Sigmoid colon (tissue), 7 donors: ENCODE measurements at regions of chr21 and their contacts with region 1.

Region 1: DNA sequence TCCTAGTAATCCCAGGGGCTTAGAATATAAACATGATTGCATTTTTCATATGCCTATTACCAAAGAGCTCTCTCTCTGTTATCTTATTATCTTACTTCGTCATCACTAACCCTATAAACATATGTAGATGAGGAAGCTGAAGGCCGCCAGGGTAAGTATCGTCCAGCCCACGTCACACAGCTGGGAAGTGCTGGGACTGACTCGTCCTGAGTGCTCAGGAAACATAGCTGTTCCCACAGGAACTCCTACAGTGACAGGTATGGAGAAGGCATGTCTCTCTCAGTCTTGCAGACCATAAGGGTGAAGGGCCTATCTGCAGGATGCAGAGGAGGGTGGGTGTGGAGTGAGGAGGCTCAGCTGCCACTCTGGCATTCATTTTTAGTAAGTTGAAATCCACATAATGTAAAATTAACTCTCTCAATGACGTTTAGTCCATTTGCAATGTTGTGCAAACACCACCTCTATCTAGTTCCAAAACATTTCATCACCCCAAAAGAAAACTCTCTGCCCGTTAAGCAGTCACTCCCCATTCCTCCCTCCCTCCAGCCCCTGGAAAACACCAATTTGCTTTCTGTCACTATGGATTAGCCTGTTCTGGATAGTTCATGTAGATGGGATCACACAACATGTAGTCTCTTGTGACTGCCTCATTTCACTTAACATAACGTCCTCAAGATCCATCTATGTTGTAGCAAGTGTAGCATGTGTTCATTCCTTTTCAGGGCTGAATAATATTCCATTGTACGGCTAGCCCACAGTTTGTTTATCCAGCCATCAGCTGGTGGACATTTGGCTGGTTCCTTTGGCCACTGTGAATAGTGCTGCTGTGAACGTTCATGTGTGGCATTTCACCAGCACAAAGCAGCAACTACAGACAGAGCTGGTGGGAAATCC is 68.3 kb downstream of the TCP10L start:
- DNase-seq: peak; percentile 67
- H3K4me3 ChIP-seq: no peak overlapping the region
- H3K27ac ChIP-seq: peak overlapping the region in 1 of 4 donors; percentile 65
- H3K4me1 ChIP-seq: peaks cover 0 to 17% (median 3%) of the 10 kb centered on the region in 4 donors
- H3K27me3 ChIP-seq: no peaks in the 10 kb centered on the region
- CTCF ChIP-seq: no peak
- EP300 ChIP-seq: no peak
- POLR2A ChIP-seq: no peak

Region 2: DNA sequence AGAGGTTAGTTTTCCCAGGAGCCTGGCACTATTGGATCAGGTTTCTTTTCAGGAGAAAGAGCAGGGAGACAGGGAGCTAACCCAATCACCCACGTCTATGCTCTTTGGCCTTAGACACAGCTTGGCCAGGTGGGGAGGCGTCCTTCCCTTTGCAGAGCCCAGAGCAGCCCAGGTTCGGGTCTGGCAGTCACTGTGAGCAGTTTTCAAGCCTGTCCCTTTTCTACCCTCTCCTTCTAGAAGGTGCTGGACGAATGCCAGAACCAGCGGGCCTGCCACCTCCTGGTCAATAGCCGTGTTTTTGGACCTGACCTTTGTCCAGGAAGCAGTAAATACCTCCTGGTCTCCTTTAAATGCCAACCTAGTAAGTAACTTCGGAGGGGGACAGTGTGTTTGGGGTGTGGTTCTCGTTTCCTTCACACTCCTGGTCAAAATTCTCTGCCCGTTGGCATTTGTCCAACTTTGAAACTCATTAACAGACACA is 59.6 kb before region 1 on chr21:
- intact Hi-C with region 1: loop called (anchors 10 kb)
- DNase-seq: no peak
- H3K4me3 ChIP-seq: no peak overlapping the region
- H3K27ac ChIP-seq: peak overlapping the region; percentile 69 to 84 (median 74)
- H3K4me1 ChIP-seq: peaks cover 0 to 27% (median 25%) of the 10 kb centered on the region in 4 donors
- H3K27me3 ChIP-seq: no peaks in the 10 kb centered on the region
- CTCF ChIP-seq: no peak
- EP300 ChIP-seq: no peak
- POLR2A ChIP-seq: no peak